Activated CD4-positive, alpha-beta memory T cell treated with anti-CD3 and anti-CD28 coated beads for 36 hours (primary cell): ENCODE measurements at regions of chr12 and their contacts with region 1.

Region 1: GRCh38 chr12:11765817-11766794 is 116.6 kb downstream of the ETV6 start:
- DNase-seq: peak; percentile 88
- H3K4me3 Mint-ChIP-seq: peak overlapping the region; percentile 28
- H3K27ac Mint-ChIP-seq: peak overlapping the region; percentile 84
- H3K4me1 Mint-ChIP-seq: peaks cover 99% of the 10 kb centered on the region
- H3K27me3 Mint-ChIP-seq: no peaks in the 10 kb centered on the region

Region 2: DNA sequence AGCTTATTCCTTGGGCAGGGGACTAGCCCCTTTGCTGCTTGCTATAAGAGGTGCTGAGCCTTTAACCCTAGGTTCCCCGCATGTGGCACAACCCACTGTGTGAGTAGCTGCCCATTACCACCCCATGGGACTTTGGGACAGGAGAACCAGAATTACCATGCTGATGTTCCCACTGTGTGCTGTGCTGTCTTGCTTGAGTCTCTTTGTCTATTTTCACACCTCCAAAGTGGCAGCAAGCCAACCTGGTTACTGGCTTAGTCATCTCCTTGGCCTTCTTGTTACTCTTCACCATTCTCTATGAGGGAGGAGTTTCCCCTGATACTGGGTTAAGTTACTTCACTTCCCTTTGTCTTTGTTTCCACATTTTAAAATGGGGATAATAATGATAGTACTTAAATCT is 190.0 kb before region 1 on chr12:
- CTCF ChIA-PET with region 1: interaction called, 5 read pairs
- POLR2A ChIA-PET with region 1: no interaction called
- intact Hi-C with region 1: loop called (anchors 5 kb)
- DNase-seq: peak; percentile 73
- H3K4me3 Mint-ChIP-seq: no peak overlapping the region
- H3K27ac Mint-ChIP-seq: no peak overlapping the region
- H3K4me1 Mint-ChIP-seq: peaks cover 24% of the 10 kb centered on the region
- H3K27me3 Mint-ChIP-seq: no peaks in the 10 kb centered on the region

Region 3: GRCh38 chr12:11711651-11712327 is 54.3 kb before region 1 on chr12:
- CTCF ChIA-PET with region 1: no interaction called
- POLR2A ChIA-PET with region 1: no interaction called
- intact Hi-C with region 1: loop called (anchors 1 kb)
- DNase-seq: no peak
- H3K4me3 Mint-ChIP-seq: no peak overlapping the region
- H3K27ac Mint-ChIP-seq: peak overlapping the region; percentile 47
- H3K4me1 Mint-ChIP-seq: peaks cover 77% of the 10 kb centered on the region
- H3K27me3 Mint-ChIP-seq: no peaks in the 10 kb centered on the region

Region 4: GRCh38 chr12:11780521-11781101 is 14.5 kb after region 1 on chr12:
- CTCF ChIA-PET with region 1: interaction called, 6 read pairs
- POLR2A ChIA-PET with region 1: interaction called, 21 read pairs
- intact Hi-C with region 1: no loop called
- DNase-seq: peak; percentile 34
- H3K4me3 Mint-ChIP-seq: no peak overlapping the region
- H3K27ac Mint-ChIP-seq: peak overlapping the region; percentile 89
- H3K4me1 Mint-ChIP-seq: peaks cover 83% of the 10 kb centered on the region
- H3K27me3 Mint-ChIP-seq: no peaks in the 10 kb centered on the region

Region 5: GRCh38 chr12:11877869-11878780 is 112.0 kb after region 1 on chr12:
- CTCF ChIA-PET with region 1: no interaction called
- POLR2A ChIA-PET with region 1: no interaction called
- intact Hi-C with region 1: loop called (anchors 5 kb)
- DNase-seq: peak; percentile 37
- H3K4me3 Mint-ChIP-seq: no peak overlapping the region
- H3K27ac Mint-ChIP-seq: peak overlapping the region; percentile 55
- H3K4me1 Mint-ChIP-seq: peaks cover 51% of the 10 kb centered on the region
- H3K27me3 Mint-ChIP-seq: no peaks in the 10 kb centered on the region